Breast epithelium (tissue), 4 donors: ENCODE measurements at regions of chr2 and their contacts with region 1.

Region 1: DNA sequence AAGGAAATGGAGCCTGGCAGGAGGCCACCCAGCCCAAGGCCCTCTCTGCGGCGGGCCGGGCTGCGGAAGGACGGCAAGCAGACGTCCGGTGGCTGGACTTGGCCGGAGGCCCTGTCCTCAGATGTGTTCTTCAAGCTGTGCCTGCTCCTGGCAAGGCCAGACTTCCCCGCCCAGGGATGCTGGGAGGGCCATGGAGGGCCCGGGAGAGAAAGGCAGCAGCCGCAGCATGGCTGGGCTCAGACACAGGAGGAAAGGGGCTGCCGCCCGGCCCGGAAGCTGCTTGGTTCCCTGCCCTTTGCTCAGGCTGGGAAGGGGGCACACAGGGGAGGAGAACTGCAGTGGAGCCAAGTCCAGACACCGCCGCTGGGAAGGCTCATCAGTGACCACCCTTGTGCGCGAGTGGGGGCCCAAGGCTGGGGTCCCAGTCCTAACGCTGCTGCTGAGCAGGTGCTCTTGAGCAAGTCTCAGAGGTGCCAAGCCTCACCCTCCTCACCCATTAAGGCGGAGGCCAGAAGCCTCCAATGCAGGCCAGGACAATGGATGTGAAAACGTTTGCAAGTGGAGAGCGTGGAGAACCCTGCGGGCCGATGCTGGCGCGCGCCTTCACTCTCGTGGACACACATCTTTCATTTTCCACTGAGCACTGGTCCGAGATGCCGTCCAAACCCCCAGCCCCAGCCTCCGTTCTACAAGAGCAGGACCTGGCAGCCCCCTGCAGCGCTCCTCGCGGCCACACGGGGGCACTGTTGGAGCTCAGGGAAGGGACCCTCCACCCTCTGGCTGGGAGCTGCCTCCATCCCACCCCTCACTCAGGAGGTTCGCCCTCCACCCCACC is 7.9 kb downstream of the CROCC2 start:
- DNase-seq: peak in 1 of 2 donors; percentile 48
- H3K4me3 ChIP-seq: no peak overlapping the region
- H3K27ac ChIP-seq: peak overlapping the region; percentile 30 to 44
- H3K4me1 ChIP-seq: peaks cover 8 to 19% of the 10 kb centered on the region in 2 donors
- H3K27me3 ChIP-seq: peaks cover 0 to 5% of the 10 kb centered on the region in 2 donors
- CTCF ChIP-seq: peak; percentile 64 to 76 (median 70)
- POLR2A ChIP-seq: no peak

Region 2: GRCh38 chr2:240780023-240780700 is 133.9 kb before region 1 on chr2:
- intact Hi-C with region 1: no loop called
- DNase-seq: no peak
- H3K4me3 ChIP-seq: peak overlapping the region in 1 of 3 donors; percentile 19
- H3K27ac ChIP-seq: no peak overlapping the region
- H3K4me1 ChIP-seq: no peaks in the 10 kb centered on the region
- H3K27me3 ChIP-seq: peaks cover 0 to 33% of the 10 kb centered on the region in 2 donors
- CTCF ChIP-seq: no peak
- POLR2A ChIP-seq: no peak

Region 3: GRCh38 chr2:240998120-240998994 is 84.3 kb after region 1 on chr2 and contains the start of gene SNED1:
- intact Hi-C with region 1: loop called (anchors 10 kb)
- DNase-seq: peak; percentile 75 to 87
- H3K4me3 ChIP-seq: peak within 1 kb of the TSS; percentile 67 to 97 (median 76)
- H3K27ac ChIP-seq: peak within 1 kb of the TSS; percentile 82 to 92
- H3K4me1 ChIP-seq: peaks cover 8 to 17% of the 10 kb centered on the region in 2 donors
- H3K27me3 ChIP-seq: no peaks in the 10 kb centered on the region
- CTCF ChIP-seq: no peak
- POLR2A ChIP-seq: peak; percentile 35
- total RNA-seq, gene SNED1: 27.1 to 46.9 (median 35.2) TPM